Breast epithelium (tissue), 4 donors: ENCODE measurements at regions of chr12 and their contacts with region 1.

Region 1: DNA sequence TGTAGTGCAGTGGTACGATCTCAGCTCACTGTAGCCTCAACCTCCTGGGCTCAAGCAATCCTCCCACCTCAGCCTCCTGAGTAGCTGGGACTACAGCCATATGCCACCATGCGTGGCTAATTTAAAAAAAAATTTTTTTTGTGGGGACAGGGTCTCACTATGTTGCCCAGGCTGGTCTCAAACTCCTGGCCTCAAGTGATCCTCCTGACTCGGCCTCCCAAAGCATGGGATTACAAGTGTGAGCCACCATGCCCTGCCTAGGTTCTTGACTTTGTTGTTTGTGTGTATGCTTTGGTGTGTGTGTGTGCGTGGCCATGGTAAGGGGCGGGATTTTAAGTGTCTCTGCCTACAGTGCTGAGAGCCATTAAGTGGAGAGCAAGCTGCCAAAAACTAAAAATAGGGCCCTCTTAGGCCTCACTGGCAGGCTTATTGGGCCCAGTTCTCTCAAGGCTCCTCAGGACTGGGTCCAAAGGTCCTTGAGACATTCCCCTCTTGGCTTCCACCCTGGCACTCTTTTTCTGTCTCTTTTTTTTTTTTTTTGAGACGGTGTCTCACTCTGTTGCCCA is 5.1 kb downstream of the COX14 start:
- DNase-seq: peak in 1 of 2 donors; percentile 2
- H3K4me3 ChIP-seq: no peak overlapping the region
- H3K27ac ChIP-seq: no peak overlapping the region
- H3K4me1 ChIP-seq: no peaks in the 10 kb centered on the region
- H3K27me3 ChIP-seq: no peaks in the 10 kb centered on the region
- CTCF ChIP-seq: no peak
- POLR2A ChIP-seq: no peak

Region 2: DNA sequence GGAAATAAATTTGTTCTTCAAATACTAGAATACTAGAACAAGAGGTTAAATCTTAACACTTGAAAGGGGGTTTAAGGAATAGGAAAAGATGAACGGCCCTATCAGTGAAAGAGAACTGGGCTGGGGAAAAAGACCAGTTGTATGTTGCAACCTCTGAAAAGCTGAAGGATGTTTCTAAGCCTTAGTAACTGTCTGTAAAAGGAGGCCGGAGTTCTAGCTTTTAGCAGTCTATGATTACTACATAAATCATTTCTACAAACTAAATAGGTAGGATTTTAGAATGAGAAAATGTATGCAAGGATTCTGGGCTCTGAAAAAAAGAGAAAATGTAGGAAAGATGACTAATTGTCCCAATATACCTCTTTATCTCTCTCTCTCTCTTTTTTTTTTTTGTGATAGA is 45.1 kb after region 1 on chr12:
- intact Hi-C with region 1: loop called (anchors 5 kb)
- DNase-seq: no peak
- H3K4me3 ChIP-seq: no peak overlapping the region
- H3K27ac ChIP-seq: no peak overlapping the region
- H3K4me1 ChIP-seq: no peaks in the 10 kb centered on the region
- H3K27me3 ChIP-seq: no peaks in the 10 kb centered on the region
- CTCF ChIP-seq: no peak
- POLR2A ChIP-seq: no peak